Activated B cell treated with CpG ODN at 0.5 μM for 24 hours (primary cell): ENCODE measurements at regions of chr6 and their contacts with region 1.

Region 1: DNA sequence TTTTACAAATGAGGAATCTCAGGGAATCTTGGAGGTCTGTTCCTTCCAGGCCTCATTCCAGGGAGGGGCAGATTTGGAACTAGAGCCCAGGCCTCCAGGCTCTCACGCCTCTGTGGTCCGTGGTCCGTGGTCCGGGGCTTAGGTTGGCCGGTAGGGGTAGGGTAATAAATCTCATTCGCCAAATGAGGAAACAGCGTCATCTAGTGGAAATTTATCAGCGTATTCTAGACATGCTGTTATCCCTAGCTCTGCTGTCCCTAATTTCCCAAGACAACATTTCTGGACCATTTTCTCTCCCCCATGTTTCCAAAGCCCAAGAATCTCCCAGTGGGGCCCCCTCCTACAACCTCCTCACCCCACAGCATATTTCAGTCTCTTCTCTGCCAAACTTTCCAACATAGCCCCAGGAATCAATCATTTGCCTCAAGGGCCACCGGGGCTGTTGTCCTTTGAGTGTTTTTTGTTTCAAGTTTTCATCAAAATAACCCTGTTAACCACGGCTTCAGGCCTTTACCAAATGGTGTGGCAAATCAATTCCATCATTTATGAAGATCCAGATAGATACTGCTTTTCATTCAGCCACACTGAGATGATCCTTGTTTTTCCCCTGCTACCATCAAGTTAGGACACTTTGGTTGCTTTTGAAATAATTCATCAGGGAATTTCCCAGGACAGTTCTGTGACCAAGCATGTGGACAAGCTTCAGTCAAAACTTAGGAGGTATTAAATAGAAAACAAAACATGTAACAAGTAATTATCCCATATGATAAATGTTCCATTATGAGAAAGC is 126.8 kb downstream of the ALDH8A1 start:
- DNase-seq: no peak
- ATAC-seq: peak; percentile 77
- H3K4me3 Mint-ChIP-seq: no peak overlapping the region
- H3K27ac Mint-ChIP-seq: no peak overlapping the region
- H3K4me1 Mint-ChIP-seq: peaks cover 10% of the 10 kb centered on the region
- H3K27me3 Mint-ChIP-seq: peaks cover 2% of the 10 kb centered on the region
- CTCF ChIP-seq: peak; percentile 45

Region 2: DNA sequence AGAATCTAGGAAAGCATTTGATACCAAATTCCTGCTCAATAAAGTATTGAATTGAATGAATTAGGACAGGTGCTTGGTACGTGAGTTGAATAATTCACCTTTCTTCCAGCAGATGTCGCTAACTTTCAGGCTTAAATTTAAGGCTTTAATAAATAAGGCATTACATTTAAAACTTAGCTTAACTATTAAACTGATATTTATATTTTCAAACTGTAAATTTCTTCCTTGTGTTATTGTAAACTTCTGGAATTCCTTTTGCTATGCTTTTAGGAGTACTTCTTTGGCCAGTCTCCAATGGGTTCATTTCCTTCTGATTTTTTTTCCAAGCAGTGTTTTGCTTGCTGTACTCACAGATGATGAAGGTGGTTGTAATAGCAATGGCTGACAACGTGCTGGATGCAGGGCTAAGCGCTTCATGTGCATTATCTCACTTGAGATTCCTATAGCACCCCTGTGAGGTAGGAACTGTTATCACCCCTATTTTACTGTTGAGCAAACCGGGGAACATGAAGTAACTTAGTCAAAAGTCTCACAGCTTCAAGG is 699.4 kb before region 1 on chr6:
- CTCF ChIA-PET with region 1: interaction called, 43 read pairs
- POLR2A ChIA-PET with region 1: interaction called, 10 read pairs
- intact Hi-C with region 1: loop called (anchors 1 kb)
- DNase-seq: no peak
- ATAC-seq: peak; percentile 52
- H3K4me3 Mint-ChIP-seq: no peak overlapping the region
- H3K27ac Mint-ChIP-seq: no peak overlapping the region
- H3K4me1 Mint-ChIP-seq: no peaks in the 10 kb centered on the region
- H3K27me3 Mint-ChIP-seq: peaks cover 2% of the 10 kb centered on the region
- CTCF ChIP-seq: peak; percentile 62

Region 3: DNA sequence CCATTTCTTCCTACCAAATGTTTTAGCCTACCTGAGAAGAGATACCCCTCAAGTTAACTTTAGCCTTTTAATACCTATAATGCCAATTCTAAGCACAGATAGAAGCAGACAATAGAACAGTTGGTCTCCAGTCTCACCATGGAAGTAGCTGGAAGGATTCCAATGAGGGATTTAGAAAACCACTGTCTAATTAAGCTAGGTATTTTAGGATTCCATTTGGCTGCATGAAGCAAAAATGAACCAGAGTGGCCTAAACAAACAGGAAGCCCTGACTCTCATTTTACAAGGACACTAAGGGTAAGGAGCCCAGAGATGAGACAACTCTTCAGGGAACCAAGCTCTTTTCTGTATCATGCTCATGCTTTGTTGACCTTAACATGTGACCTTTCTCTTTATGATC is 72.4 kb before region 1 on chr6:
- CTCF ChIA-PET with region 1: no interaction called
- POLR2A ChIA-PET with region 1: no interaction called
- intact Hi-C with region 1: no loop called
- DNase-seq: no peak
- ATAC-seq: no peak
- H3K4me3 Mint-ChIP-seq: no peak overlapping the region
- H3K27ac Mint-ChIP-seq: no peak overlapping the region
- H3K4me1 Mint-ChIP-seq: no peaks in the 10 kb centered on the region
- H3K27me3 Mint-ChIP-seq: peaks cover 8% of the 10 kb centered on the region
- CTCF ChIP-seq: no peak